ENCODE measurements at regions of chr11 and their contacts with region 1.

Region 1: GRCh38 chr11:66592457-66593302 is at the starts of genes CCDC87 and CCS:
- DNase-seq: peak; percentile 99
- H3K4me3 Mint-ChIP-seq: peak within 1 kb of the TSS; percentile 99
- H3K27ac Mint-ChIP-seq: peak within 1 kb of the TSS; percentile 97
- H3K4me1 Mint-ChIP-seq: peaks cover 21% of the 10 kb centered on the region
- H3K27me3 Mint-ChIP-seq: no peaks in the 10 kb centered on the region
- total RNA-seq, gene CCDC87: 0.19 and 0.21 TPM in 2 replicates
- total RNA-seq, gene CCS: 28.3 and 31.4 TPM in 2 replicates

Region 2: GRCh38 chr11:66545701-66546367 is 46.8 kb before region 1 on chr11 and contains the start of gene ZDHHC24:
- intact Hi-C with region 1: loop called (anchors 2 kb)
- DNase-seq: peak; percentile 97
- H3K4me3 Mint-ChIP-seq: peak within 1 kb of the TSS; percentile 89
- H3K27ac Mint-ChIP-seq: peak within 1 kb of the TSS; percentile 80
- H3K4me1 Mint-ChIP-seq: peaks cover 17% of the 10 kb centered on the region
- H3K27me3 Mint-ChIP-seq: peaks cover 13% of the 10 kb centered on the region
- total RNA-seq, gene ZDHHC24: 12.2 and 13.9 TPM in 2 replicates

Region 3: GRCh38 chr11:66638177-66639065 is 45.7 kb after region 1 on chr11 and contains the start of gene RBM4:
- intact Hi-C with region 1: loop called (anchors 1 kb)
- DNase-seq: peak; percentile 99
- H3K4me3 Mint-ChIP-seq: peak within 1 kb of the TSS; percentile 91
- H3K27ac Mint-ChIP-seq: peak within 1 kb of the TSS; percentile 98
- H3K4me1 Mint-ChIP-seq: peaks cover 53% of the 10 kb centered on the region
- H3K27me3 Mint-ChIP-seq: no peaks in the 10 kb centered on the region
- total RNA-seq, gene RBM4: 109 and 133 TPM in 2 replicates

Measured in activated CD4-positive, alpha-beta T cell treated with anti-CD3 and anti-CD28 coated beads, Interleukin-2, amount 10 ng/mL, durations not matched to agents 24 days and 14 days (primary cell).